CD4-positive, alpha-beta T cell (primary cell): ENCODE measurements at regions of chr1 and their contacts with region 1.

Region 1: GRCh38 chr1:165392634-165393571 is 36.4 kb upstream of the LMX1A start:
- DNase-seq: peak; percentile 83 to 97 (median 88)
- ATAC-seq: peak; percentile 99
- H3K4me3 ChIP-seq: peak overlapping the region; percentile 23
- H3K4me3 Mint-ChIP-seq: peak overlapping the region; percentile 75
- H3K27ac ChIP-seq: no peak overlapping the region
- H3K27ac Mint-ChIP-seq: peak overlapping the region; percentile 75
- H3K4me1 ChIP-seq: peaks cover 19% of the 10 kb centered on the region
- H3K4me1 Mint-ChIP-seq: peaks cover 17% of the 10 kb centered on the region
- H3K27me3 ChIP-seq: peaks cover 56 to 72% of the 10 kb centered on the region in 2 experiments
- H3K27me3 Mint-ChIP-seq: peaks cover 92% of the 10 kb centered on the region
- CTCF ChIP-seq: peak; percentile 98

Region 2: DNA sequence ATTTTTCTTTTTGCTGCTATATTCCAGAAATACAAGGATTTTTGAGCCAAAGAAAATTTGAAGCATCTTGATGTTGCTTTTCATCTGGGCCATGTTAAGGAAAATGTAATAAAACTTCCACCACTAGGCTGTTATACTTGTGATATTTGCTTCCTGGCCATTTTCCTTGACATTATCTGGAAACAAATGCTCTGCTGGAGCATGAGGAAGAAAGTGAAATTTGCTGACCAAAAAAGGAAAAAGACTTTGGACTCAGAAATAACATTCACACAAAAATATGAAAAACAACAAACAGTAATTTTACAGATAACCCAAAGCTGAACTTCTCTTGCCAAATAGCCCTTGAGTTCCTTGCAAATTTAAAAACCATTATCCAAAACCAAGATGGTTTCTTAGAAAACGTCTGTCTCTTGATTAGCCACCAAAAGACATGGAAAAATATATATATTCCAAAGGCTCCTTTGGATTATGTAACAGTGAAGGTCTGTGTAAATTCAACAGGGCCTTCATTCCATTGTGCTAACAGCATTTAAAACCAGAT is 380.8 kb before region 1 on chr1:
- CTCF ChIA-PET with region 1: no interaction called
- POLR2A ChIA-PET with region 1: no interaction called
- intact Hi-C with region 1: no loop called
- DNase-seq: no peak
- ATAC-seq: no peak
- H3K4me3 ChIP-seq: no peak overlapping the region
- H3K4me3 Mint-ChIP-seq: no peak overlapping the region
- H3K27ac ChIP-seq: no peak overlapping the region
- H3K27ac Mint-ChIP-seq: no peak overlapping the region
- H3K4me1 ChIP-seq: no peaks in the 10 kb centered on the region
- H3K4me1 Mint-ChIP-seq: no peaks in the 10 kb centered on the region
- H3K27me3 ChIP-seq: no peaks in the 10 kb centered on the region
- H3K27me3 Mint-ChIP-seq: no peaks in the 10 kb centered on the region
- CTCF ChIP-seq: no peak

Region 3: GRCh38 chr1:165367375-165367993 is 25.4 kb before region 1 on chr1:
- CTCF ChIA-PET with region 1: interaction called, 17 read pairs
- POLR2A ChIA-PET with region 1: interaction called, 3 read pairs
- intact Hi-C with region 1: no loop called
- DNase-seq: peak; percentile 59 to 84 (median 74)
- ATAC-seq: peak; percentile 65
- H3K4me3 ChIP-seq: no peak overlapping the region
- H3K4me3 Mint-ChIP-seq: no peak overlapping the region
- H3K27ac ChIP-seq: no peak overlapping the region
- H3K27ac Mint-ChIP-seq: no peak overlapping the region
- H3K4me1 ChIP-seq: peaks cover 6% of the 10 kb centered on the region
- H3K4me1 Mint-ChIP-seq: no peaks in the 10 kb centered on the region
- H3K27me3 ChIP-seq: peaks cover 13 to 48% of the 10 kb centered on the region in 2 experiments
- H3K27me3 Mint-ChIP-seq: peaks cover 79% of the 10 kb centered on the region
- CTCF ChIP-seq: peak; percentile 97

Region 4: GRCh38 chr1:165703648-165704047 is 310.7 kb after region 1 on chr1:
- CTCF ChIA-PET with region 1: no interaction called
- POLR2A ChIA-PET with region 1: no interaction called
- intact Hi-C with region 1: loop called in 1 of 2 experiments (anchors 10 kb)
- DNase-seq: no peak
- ATAC-seq: no peak
- H3K4me3 ChIP-seq: no peak overlapping the region
- H3K4me3 Mint-ChIP-seq: no peak overlapping the region
- H3K27ac ChIP-seq: no peak overlapping the region
- H3K27ac Mint-ChIP-seq: no peak overlapping the region
- H3K4me1 ChIP-seq: peaks cover 9% of the 10 kb centered on the region
- H3K4me1 Mint-ChIP-seq: peaks cover 10% of the 10 kb centered on the region
- H3K27me3 ChIP-seq: peaks cover 0 to 5% of the 10 kb centered on the region in 2 experiments
- H3K27me3 Mint-ChIP-seq: peaks cover 26% of the 10 kb centered on the region
- CTCF ChIP-seq: no peak

Region 5: DNA sequence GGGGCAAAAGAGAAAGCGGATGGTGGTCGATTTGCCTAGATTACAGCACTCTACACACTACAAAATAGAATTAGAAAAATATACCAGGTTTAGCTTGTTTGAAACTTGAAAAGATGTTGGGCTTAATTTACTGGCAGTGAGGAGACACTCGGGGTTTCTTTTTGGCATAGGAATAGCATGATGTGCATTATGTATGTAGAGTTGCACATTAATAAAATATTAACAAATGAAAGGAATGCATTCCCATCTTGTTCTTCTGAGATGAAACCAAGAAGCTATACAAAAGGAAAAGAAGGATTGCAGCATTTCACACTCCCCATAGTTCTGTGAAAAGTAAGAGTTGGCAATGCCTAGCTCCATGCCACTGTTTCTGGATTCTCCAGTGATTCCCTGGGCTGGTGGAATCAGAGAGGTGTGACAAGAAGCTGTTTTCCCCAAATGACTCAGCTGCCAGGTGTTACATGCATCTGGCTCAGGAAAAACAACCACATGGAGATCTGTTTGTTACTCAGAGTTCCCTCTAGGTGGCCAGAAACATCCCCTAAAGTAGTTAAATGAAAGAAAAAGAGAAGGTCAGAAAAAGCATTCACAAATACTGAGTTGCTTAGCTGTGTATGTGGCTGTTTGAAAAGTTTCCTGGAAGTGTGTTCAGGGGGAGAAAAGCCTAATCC is 550.2 kb after region 1 on chr1:
- CTCF ChIA-PET with region 1: no interaction called
- POLR2A ChIA-PET with region 1: no interaction called
- intact Hi-C with region 1: no loop called
- DNase-seq: no peak
- ATAC-seq: no peak
- H3K4me3 ChIP-seq: no peak overlapping the region
- H3K4me3 Mint-ChIP-seq: no peak overlapping the region
- H3K27ac ChIP-seq: no peak overlapping the region
- H3K27ac Mint-ChIP-seq: no peak overlapping the region
- H3K4me1 ChIP-seq: no peaks in the 10 kb centered on the region
- H3K4me1 Mint-ChIP-seq: no peaks in the 10 kb centered on the region
- H3K27me3 ChIP-seq: peaks cover 0 to 4% of the 10 kb centered on the region in 2 experiments
- H3K27me3 Mint-ChIP-seq: peaks cover 22% of the 10 kb centered on the region
- CTCF ChIP-seq: no peak

Region 6: GRCh38 chr1:166479052-166479631 is 1086.2 kb after region 1 on chr1:
- CTCF ChIA-PET with region 1: no interaction called
- POLR2A ChIA-PET with region 1: no interaction called
- intact Hi-C with region 1: loop called (anchors 5 kb)
- DNase-seq: peak in 12 of 14 experiments; percentile 12 to 72 (median 44)
- ATAC-seq: peak; percentile 29
- H3K4me3 ChIP-seq: no peak overlapping the region
- H3K4me3 Mint-ChIP-seq: no peak overlapping the region
- H3K27ac ChIP-seq: no peak overlapping the region
- H3K27ac Mint-ChIP-seq: no peak overlapping the region
- H3K4me1 ChIP-seq: no peaks in the 10 kb centered on the region
- H3K4me1 Mint-ChIP-seq: no peaks in the 10 kb centered on the region
- H3K27me3 ChIP-seq: no peaks in the 10 kb centered on the region
- H3K27me3 Mint-ChIP-seq: no peaks in the 10 kb centered on the region
- CTCF ChIP-seq: peak; percentile 89

Region 7: GRCh38 chr1:167043752-167044488 is 1651.0 kb after region 1 on chr1:
- CTCF ChIA-PET with region 1: no interaction called
- POLR2A ChIA-PET with region 1: no interaction called
- intact Hi-C with region 1: loop called in 1 of 2 experiments (anchors 10 kb)
- DNase-seq: peak; percentile 38 to 87 (median 63)
- ATAC-seq: peak; percentile 99
- H3K4me3 ChIP-seq: peak overlapping the region; percentile 56
- H3K4me3 Mint-ChIP-seq: peak overlapping the region; percentile 90
- H3K27ac ChIP-seq: no peak overlapping the region
- H3K27ac Mint-ChIP-seq: peak overlapping the region; percentile 69
- H3K4me1 ChIP-seq: peaks cover 12% of the 10 kb centered on the region
- H3K4me1 Mint-ChIP-seq: peaks cover 14% of the 10 kb centered on the region
- H3K27me3 ChIP-seq: peaks cover 0 to 5% of the 10 kb centered on the region in 2 experiments
- H3K27me3 Mint-ChIP-seq: peaks cover 9% of the 10 kb centered on the region
- CTCF ChIP-seq: no peak